ENCODE measurements at regions of chr11 and their contacts with region 1.

Region 1: GRCh38 chr11:57657194-57658022 is at the start of gene CLP1:
- DNase-seq: peak; percentile 100
- H3K4me3 Mint-ChIP-seq: peak within 1 kb of the TSS; percentile 92
- H3K27ac Mint-ChIP-seq: peak within 1 kb of the TSS; percentile 90
- H3K4me1 Mint-ChIP-seq: peaks cover 34% of the 10 kb centered on the region
- H3K27me3 Mint-ChIP-seq: no peaks in the 10 kb centered on the region
- total RNA-seq, gene CLP1: 11.3 to 14.2 TPM

Region 2: DNA sequence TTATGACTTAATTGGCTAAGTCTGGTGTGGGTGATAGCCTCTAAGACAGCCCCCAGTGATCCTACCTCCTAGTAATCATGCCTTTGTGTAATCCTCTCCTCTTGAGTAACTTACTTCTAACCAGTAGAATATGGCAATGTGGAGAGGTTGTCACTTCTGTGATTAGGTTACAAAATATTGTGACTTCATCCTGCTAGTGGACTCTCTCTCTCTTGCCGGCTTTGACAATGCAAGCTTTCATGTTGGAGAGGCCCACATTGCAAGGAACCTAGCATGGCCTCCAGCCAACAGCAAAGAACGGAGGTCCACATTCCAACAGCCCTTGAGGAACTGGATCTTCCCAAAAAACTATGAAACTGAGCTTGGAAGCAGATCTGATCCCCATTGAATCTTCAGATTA is 27.2 kb before region 1 on chr11:
- CTCF ChIA-PET with region 1: no interaction called
- intact Hi-C with region 1: no loop called
- DNase-seq: no peak
- H3K4me3 Mint-ChIP-seq: no peak overlapping the region
- H3K27ac Mint-ChIP-seq: no peak overlapping the region
- H3K4me1 Mint-ChIP-seq: no peaks in the 10 kb centered on the region
- H3K27me3 Mint-ChIP-seq: peaks cover 12% of the 10 kb centered on the region

Region 3: GRCh38 chr11:57712256-57713150 is 55.1 kb after region 1 on chr11 and contains the start of gene TMX2:
- CTCF ChIA-PET with region 1: no interaction called
- intact Hi-C with region 1: loop called (anchors 1 kb)
- DNase-seq: peak; percentile 95
- H3K4me3 Mint-ChIP-seq: peak within 1 kb of the TSS; percentile 99
- H3K27ac Mint-ChIP-seq: peak within 1 kb of the TSS; percentile 92
- H3K4me1 Mint-ChIP-seq: peaks cover 50% of the 10 kb centered on the region
- H3K27me3 Mint-ChIP-seq: no peaks in the 10 kb centered on the region
- total RNA-seq, gene TMX2: 49.8 to 54.7 TPM

Region 4: DNA sequence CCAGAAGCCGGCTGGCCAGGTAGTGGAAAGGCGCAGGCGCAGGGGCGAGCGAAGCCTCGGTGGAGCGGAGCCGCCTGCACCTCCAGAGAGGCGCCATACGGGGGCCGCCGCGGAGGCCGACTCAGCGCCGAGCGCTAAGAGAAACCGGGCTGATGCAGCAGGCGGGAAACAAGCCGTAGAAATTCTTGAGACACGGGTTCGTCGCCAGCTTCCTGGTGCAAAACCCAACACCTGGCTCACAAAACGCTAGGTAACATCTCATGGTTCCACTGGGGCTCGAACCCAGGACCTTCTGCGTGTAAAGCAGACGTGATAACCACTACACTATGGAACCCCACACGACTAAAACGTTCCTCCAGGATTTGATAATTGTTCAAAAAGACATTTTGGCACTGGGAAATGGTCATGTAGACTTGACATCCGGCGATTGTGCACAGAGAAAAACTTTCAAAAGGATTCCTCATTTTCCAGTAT is 1893.0 kb after region 1 on chr11:
- CTCF ChIA-PET with region 1: no interaction called
- intact Hi-C with region 1: loop called (anchors 10 kb)
- DNase-seq: peak; percentile 93
- H3K4me3 Mint-ChIP-seq: peak overlapping the region; percentile 79
- H3K27ac Mint-ChIP-seq: peak overlapping the region; percentile 93
- H3K4me1 Mint-ChIP-seq: peaks cover 27% of the 10 kb centered on the region
- H3K27me3 Mint-ChIP-seq: peaks cover 5% of the 10 kb centered on the region

Measured in activated naive CD4-positive, alpha-beta T cell treated with anti-CD3 and anti-CD28 coated beads for 36 hours (primary cell).